Caco-2 (cell line): ENCODE measurements at regions of chrX and their contacts with region 1.

Region 1: GRCh38 chrX:129606918-129607317 is 47.8 kb downstream of the APLN start:
- DNase-seq: peak in 1 of 2 experiments; percentile 61
- H3K4me3 ChIP-seq: no peak overlapping the region
- H3K4me3 Mint-ChIP-seq: no peak overlapping the region
- H3K27ac Mint-ChIP-seq: no peak overlapping the region
- H3K4me1 ChIP-seq: peaks cover 11% of the 10 kb centered on the region
- H3K4me1 Mint-ChIP-seq: peaks cover 6% of the 10 kb centered on the region
- H3K27me3 ChIP-seq: no peaks in the 10 kb centered on the region
- H3K27me3 Mint-ChIP-seq: no peaks in the 10 kb centered on the region
- CTCF ChIP-seq: peak; percentile 30 to 61

Region 2: GRCh38 chrX:129654419-129655165 is 47.7 kb after region 1 on chrX and contains the start of gene APLN:
- CTCF ChIA-PET with region 1: no interaction called
- POLR2A ChIA-PET with region 1: no interaction called
- intact Hi-C with region 1: loop called (anchors 5 kb)
- DNase-seq: peak in 1 of 2 experiments; percentile 47
- H3K4me3 ChIP-seq: peak within 1 kb of the TSS; percentile 51
- H3K4me3 Mint-ChIP-seq: peak within 1 kb of the TSS; percentile 75
- H3K27ac Mint-ChIP-seq: no peak within 1 kb of the TSS
- H3K4me1 ChIP-seq: no peaks in the 10 kb centered on the region
- H3K4me1 Mint-ChIP-seq: no peaks in the 10 kb centered on the region
- H3K27me3 ChIP-seq: no peaks in the 10 kb centered on the region
- H3K27me3 Mint-ChIP-seq: peaks cover 4% of the 10 kb centered on the region
- CTCF ChIP-seq: no peak
- total RNA-seq, gene APLN: 0.09 and 0.20 TPM in 2 replicates

Region 3: GRCh38 chrX:129823115-129823514 is 216.2 kb after region 1 on chrX:
- CTCF ChIA-PET with region 1: no interaction called
- POLR2A ChIA-PET with region 1: no interaction called
- intact Hi-C with region 1: loop called (anchors 2 kb)
- DNase-seq: peak; percentile 32 to 45
- H3K4me3 ChIP-seq: no peak overlapping the region
- H3K4me3 Mint-ChIP-seq: no peak overlapping the region
- H3K27ac Mint-ChIP-seq: no peak overlapping the region
- H3K4me1 ChIP-seq: no peaks in the 10 kb centered on the region
- H3K4me1 Mint-ChIP-seq: peaks cover 6% of the 10 kb centered on the region
- H3K27me3 ChIP-seq: no peaks in the 10 kb centered on the region
- H3K27me3 Mint-ChIP-seq: no peaks in the 10 kb centered on the region
- CTCF ChIP-seq: peak; percentile 41 to 54

Region 4: GRCh38 chrX:130013661-130014060 is 406.7 kb after region 1 on chrX:
- CTCF ChIA-PET with region 1: interaction called, 11 read pairs
- POLR2A ChIA-PET with region 1: no interaction called
- intact Hi-C with region 1: no loop called
- DNase-seq: no peak
- H3K4me3 ChIP-seq: no peak overlapping the region
- H3K4me3 Mint-ChIP-seq: no peak overlapping the region
- H3K27ac Mint-ChIP-seq: no peak overlapping the region
- H3K4me1 ChIP-seq: no peaks in the 10 kb centered on the region
- H3K4me1 Mint-ChIP-seq: no peaks in the 10 kb centered on the region
- H3K27me3 ChIP-seq: no peaks in the 10 kb centered on the region
- H3K27me3 Mint-ChIP-seq: no peaks in the 10 kb centered on the region
- CTCF ChIP-seq: no peak

Region 5: DNA sequence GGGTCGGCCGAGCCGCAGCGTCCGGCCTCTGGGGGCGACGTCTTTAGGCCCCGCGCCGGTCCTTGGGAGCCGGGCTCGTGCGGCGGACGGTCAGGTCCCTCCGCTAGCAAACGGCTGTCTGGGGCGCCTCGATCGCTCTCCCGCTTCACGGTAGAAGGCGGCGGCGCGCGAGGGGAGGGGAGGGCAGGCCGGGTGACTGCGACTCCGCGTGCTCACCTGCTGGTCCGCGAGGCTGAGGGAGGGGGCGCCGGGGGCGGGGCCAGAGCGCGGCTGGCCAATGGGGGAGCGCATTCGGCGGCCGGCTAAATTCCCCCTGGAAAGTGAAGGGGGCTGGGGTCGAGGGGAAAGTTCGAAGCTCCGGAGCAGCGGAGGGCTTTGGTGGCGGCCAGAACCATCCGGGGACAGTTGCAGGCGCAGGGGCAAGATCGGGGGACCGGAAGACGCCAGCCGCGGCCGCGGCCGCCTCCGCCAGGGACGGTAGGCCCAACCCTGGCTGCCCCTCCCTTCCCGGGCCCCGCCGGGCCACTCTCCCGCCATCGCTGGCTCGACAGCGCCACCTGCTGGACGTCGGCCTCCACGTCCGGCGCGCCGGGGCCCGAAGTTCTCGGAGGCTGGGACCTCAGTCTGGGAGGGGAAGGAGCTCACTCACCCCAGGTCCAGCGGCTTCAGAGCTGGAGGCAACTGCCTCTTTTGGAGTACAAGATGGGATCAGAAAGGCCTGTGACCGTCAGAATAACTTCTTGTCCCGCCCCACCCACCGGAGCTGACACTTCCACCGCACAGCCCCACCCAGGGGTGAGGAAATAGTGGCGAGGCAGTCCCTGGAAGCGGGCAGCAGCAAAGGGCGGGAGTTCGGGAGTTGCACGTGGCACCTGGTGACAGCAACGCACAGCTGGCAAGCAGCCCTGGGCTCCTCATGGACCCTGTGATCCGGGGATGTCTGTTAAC is 453.5 kb after region 1 on chrX:
- CTCF ChIA-PET with region 1: no interaction called
- POLR2A ChIA-PET with region 1: no interaction called
- intact Hi-C with region 1: loop called (anchors 5 kb)
- DNase-seq: peak; percentile 77 to 90
- H3K4me3 ChIP-seq: peak overlapping the region; percentile 42
- H3K4me3 Mint-ChIP-seq: peak overlapping the region; percentile 77
- H3K27ac Mint-ChIP-seq: peak overlapping the region; percentile 91
- H3K4me1 ChIP-seq: 0 out of 2 replicates have a peak, but pooled peaks cover 3% of the 10 kb centered on the region
- H3K4me1 Mint-ChIP-seq: peaks cover 9% of the 10 kb centered on the region
- H3K27me3 ChIP-seq: no peaks in the 10 kb centered on the region
- H3K27me3 Mint-ChIP-seq: no peaks in the 10 kb centered on the region
- CTCF ChIP-seq: peak; percentile 72